GM12878 (cell line): ENCODE measurements at regions of chr12 and their contacts with region 1.

Region 1: GRCh38 chr12:118302066-118302465 is 70.6 kb downstream of the TAOK3 start:
- DNase-seq: no peak
- ATAC-seq: peak; percentile 45
- H3K4me3 ChIP-seq: no peak overlapping the region
- H3K27ac ChIP-seq: peak overlapping the region; percentile 48; the same call in 1 of the 2 replicates
- H3K4me1 ChIP-seq: peaks cover 29% of the 10 kb centered on the region
- H3K27me3 ChIP-seq: no peaks in the 10 kb centered on the region
- CTCF ChIP-seq: no peak
- EP300 ChIP-seq: no peak
- POLR2A ChIP-seq: no peak
- RAD21 ChIP-seq: no peak

Region 2: GRCh38 chr12:118312578-118312977 is 10.5 kb after region 1 on chr12:
- CTCF ChIA-PET with region 1: interaction called, 17 read pairs
- POLR2A ChIA-PET with region 1: interaction called, 8 read pairs
- RAD21 ChIA-PET with region 1: interaction called, 6 read pairs
- SMC1A ChIA-PET with region 1: interaction called, 43 read pairs
- in situ Hi-C with region 1: no loop called
- intact Hi-C with region 1: no loop called
- DNase-seq: peak; percentile 73
- ATAC-seq: peak; percentile 87
- H3K4me3 ChIP-seq: peak overlapping the region; percentile 47; the same call in 1 of the 2 replicates
- H3K27ac ChIP-seq: peak overlapping the region; percentile 82
- H3K4me1 ChIP-seq: peaks cover 40% of the 10 kb centered on the region
- H3K27me3 ChIP-seq: no peaks in the 10 kb centered on the region
- CTCF ChIP-seq: no peak
- EP300 ChIP-seq: peak in 1 of 2 experiments; percentile 38; a peak in 2 of 4 replicates
- POLR2A ChIP-seq: no peak
- RAD21 ChIP-seq: no peak

Region 3: GRCh38 chr12:118377884-118378470 is 75.9 kb after region 1 on chr12:
- CTCF ChIA-PET with region 1: interaction called, 85 read pairs
- POLR2A ChIA-PET with region 1: interaction called, 20 read pairs
- RAD21 ChIA-PET with region 1: interaction called, 72 read pairs
- SMC1A ChIA-PET with region 1: interaction called, 117 read pairs
- in situ Hi-C with region 1: no loop called
- intact Hi-C with region 1: loop called (anchors 2 kb)
- DNase-seq: no peak
- ATAC-seq: peak; percentile 39
- H3K4me3 ChIP-seq: peak overlapping the region; percentile 83
- H3K27ac ChIP-seq: peak overlapping the region; percentile 27; the same call in 1 of the 2 replicates
- H3K4me1 ChIP-seq: peaks cover 3% of the 10 kb centered on the region
- H3K27me3 ChIP-seq: no peaks in the 10 kb centered on the region
- CTCF ChIP-seq: peak; percentile 79 to 90 (median 79)
- EP300 ChIP-seq: no peak
- POLR2A ChIP-seq: no peak
- RAD21 ChIP-seq: peak; percentile 48

Region 4: GRCh38 chr12:118611295-118611694 is 309.2 kb after region 1 on chr12:
- CTCF ChIA-PET with region 1: no interaction called
- POLR2A ChIA-PET with region 1: no interaction called
- RAD21 ChIA-PET with region 1: no interaction called
- SMC1A ChIA-PET with region 1: no interaction called
- in situ Hi-C with region 1: no loop called
- intact Hi-C with region 1: no loop called
- DNase-seq: no peak
- ATAC-seq: no peak
- H3K4me3 ChIP-seq: no peak overlapping the region
- H3K27ac ChIP-seq: no peak overlapping the region
- H3K4me1 ChIP-seq: no peaks in the 10 kb centered on the region
- H3K27me3 ChIP-seq: no peaks in the 10 kb centered on the region
- CTCF ChIP-seq: no peak
- EP300 ChIP-seq: no peak
- POLR2A ChIP-seq: no peak
- RAD21 ChIP-seq: no peak